ENCODE measurements at regions of chr1 and their contacts with region 1.

Region 1: GRCh38 chr1:41662061-41662764 is 177.7 kb upstream of the EDN2 start:
- DNase-seq: peak; percentile 84
- ATAC-seq: peak; percentile 75

Region 2: DNA sequence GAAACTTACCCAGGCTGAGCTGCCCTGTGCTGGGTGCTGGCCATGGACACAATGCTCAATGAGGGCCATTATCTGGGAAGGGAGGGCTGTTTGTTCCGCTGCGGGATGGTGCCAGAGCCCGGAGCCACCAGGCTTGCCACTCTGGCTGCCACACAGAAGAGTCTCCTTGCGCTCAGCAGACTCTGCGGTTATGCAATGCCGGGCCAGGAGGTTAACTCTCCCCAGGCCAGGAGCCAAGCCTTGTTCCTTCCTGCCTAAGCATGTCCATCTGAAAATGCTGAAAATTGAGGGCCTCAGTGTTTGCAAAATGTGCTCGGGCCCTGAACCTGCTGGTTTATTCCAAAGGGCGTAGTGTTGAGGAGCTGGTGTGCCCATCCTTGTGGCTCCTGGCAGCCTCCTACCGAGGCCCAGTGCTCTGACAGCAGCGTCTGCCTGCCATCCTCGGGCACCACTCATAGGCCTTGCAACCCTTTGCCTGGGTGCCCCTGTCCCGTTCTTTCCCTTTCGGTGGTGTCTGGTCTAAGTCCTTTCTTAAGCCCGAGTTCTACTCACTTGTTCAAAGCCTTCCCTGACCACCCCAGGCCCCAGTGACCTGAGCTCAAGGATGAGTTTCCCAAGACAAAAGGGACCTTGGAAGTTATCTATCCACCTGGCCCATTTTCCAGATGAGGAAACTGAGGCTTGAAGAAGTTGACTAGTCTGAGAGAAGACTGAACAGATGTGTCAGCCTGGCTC is 44.0 kb before region 1 on chr1:
- intact Hi-C with region 1: loop called (anchors 5 kb)
- DNase-seq: peak; percentile 84
- ATAC-seq: peak; percentile 96

Region 3: GRCh38 chr1:41773144-41773591 is 111.0 kb after region 1 on chr1:
- intact Hi-C with region 1: loop called (anchors 5 kb)
- DNase-seq: no peak
- ATAC-seq: peak; percentile 34

Region 4: DNA sequence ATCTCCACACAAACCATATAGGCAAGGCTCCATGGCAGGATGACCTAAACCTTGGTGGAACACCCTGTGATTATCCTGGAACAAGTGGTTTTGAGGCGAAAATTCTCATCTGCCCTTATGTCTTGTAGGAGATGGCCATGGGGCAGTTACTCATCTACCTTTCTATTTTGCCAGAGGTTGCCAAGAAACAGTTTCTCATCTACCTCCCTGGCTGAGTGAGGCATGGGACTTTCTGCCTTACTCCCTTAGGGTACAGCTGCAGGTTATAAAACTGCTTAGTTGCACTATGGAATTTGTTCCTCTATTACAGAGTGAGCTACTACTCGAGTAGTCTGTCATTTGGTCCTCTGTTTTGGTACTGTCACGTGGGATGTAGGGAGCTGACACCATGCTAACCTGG is 533.6 kb after region 1 on chr1:
- intact Hi-C with region 1: no loop called
- DNase-seq: no peak
- ATAC-seq: no peak

Measured in Right ventricle myocardium inferior (tissue), 1 donor.